GM10248 (cell line): ENCODE measurements at regions of chr6 and their contacts with region 1.

Region 1: DNA sequence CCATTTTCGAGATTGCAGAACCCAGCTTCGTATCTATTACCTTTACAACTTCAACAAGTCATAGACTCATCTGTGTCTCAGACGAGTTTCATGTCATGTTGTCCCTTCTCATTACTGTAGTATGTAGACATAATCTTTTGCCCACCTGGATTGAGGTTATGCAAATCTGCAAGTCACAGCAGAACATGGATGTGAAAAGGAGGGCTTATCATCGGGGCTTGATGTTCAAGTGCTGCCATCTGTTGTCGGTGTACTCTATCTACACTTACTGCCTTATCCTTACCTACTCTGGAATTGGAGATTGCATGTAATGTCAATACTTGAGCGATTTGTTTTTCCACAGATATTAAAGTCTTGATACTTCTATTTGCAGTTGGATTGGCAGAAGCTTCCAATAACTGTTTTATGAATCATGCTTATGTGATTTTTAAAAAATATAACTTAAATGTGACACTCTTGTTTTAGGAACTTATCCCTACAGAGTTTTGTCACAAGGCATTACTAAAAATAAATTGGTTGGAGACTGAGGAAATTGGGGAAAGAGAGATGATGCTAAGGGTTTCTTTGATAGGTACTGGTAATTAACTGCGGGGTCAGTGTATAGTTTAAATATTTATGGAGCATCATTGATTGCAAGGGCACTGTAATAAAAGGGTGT is 3.0 kb upstream of the GOPC start:
- DNase-seq: peak; percentile 60
- CTCF ChIP-seq: peak; percentile 60

Region 2: DNA sequence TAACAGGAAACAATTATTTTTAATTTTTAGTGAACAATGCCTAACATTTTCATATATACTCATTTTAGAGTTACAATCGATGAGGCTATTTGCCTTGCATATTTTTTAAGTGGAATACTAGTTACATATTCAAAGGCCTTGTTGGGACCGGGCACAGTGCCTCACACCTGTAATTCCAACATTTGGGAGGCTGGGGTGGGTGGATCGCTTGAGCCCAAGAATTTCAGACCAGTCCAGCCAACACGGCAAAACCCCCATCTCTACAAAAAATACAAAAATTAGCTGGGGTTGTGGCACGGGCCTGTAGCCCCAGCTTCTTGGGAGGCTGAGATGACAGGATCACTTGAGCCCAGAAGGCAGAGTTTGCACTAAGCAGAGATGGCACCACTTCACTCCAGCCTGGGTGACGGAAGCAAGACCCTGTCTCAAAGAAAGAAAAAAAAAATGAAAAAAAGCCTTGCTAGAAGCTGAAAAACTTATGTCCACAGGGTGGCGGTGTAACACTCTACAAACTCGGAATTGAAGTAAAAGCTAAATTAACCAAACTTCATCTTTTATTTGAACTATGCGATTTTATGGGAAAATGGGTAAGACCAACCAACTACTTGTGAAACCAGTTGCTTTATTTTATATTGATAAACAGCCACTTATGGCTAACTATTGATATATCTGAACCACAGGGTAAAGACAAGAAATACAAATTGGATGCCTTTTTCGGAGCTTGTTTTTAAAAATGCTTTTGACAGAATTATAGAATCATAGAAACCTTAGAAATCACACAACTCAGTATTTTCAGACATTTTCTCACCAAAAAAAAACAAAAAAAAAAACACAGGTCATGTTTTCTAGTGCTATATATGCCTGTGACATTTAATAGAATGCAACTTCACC is 155.5 kb before region 1 on chr6:
- CTCF ChIA-PET with region 1: interaction called, 58 read pairs
- POLR2A ChIA-PET with region 1: no interaction called
- DNase-seq: peak; percentile 21
- CTCF ChIP-seq: peak; percentile 55

Region 3: DNA sequence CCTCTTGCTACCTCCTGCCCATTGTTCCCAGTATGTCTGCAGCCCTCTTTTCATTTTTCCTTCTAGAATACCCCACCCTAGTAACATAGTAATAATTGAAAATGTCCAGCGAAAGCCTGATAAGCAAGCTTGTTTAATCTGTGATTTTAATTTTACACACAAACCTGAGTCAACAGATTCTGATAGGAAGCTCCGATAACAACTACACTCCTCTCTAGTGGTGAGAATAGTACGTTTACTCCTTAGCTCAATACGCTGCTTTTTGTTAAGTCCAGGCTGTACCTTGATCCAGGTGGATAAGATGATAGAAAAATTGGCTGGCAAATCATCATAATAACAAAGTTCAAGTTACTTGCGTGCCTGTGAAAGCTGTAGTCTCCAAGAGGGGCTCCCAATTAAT is 148.3 kb before region 1 on chr6:
- CTCF ChIA-PET with region 1: interaction called, 58 read pairs
- POLR2A ChIA-PET with region 1: no interaction called
- DNase-seq: no peak
- CTCF ChIP-seq: no peak

Region 4: DNA sequence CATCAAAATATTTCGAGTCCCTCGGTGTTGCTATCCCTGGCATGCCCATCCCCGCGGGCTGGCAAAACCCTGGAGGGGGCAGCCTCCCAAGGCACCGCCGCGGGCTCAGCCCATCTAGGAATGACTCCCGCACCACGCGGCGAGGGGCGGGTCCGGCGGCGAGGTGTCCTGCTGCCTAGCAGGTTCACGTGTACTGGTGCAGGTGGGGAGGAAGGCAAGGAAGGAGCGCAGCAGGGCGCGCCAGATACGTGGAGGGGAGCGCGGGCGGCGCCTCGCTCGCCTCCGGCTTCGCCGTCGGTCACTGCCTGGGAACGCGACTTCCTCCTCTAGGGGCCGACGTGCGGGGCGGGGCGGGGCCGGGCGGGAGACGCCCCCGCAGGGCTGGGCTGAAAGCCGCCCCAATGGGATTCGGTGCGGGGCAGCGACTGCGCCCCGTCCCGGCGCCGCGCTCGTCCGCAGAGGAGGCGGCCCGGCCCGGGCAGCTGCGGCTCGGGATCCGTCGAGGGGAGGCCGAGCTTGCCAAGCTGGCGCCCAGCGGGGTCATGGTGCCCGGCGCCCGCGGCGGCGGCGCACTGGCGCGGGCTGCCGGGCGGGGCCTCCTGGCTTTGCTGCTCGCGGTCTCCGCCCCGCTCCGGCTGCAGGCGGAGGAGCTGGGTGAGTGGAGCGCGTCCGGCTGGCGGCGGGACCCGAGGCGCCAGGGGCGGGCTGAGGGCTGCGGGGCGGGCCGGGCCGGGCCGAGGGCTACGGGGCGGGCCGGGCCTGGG is 122.9 kb before region 1 on chr6 and contains the start of gene DCBLD1:
- CTCF ChIA-PET with region 1: interaction called, 35 read pairs
- POLR2A ChIA-PET with region 1: interaction called, 3 read pairs
- DNase-seq: peak; percentile 84
- CTCF ChIP-seq: no peak

Region 5: GRCh38 chr6:117585647-117586046 is 19.7 kb before region 1 on chr6:
- CTCF ChIA-PET with region 1: interaction called, 13 read pairs
- POLR2A ChIA-PET with region 1: interaction called, 3 read pairs
- DNase-seq: no peak
- CTCF ChIP-seq: no peak

Region 6: DNA sequence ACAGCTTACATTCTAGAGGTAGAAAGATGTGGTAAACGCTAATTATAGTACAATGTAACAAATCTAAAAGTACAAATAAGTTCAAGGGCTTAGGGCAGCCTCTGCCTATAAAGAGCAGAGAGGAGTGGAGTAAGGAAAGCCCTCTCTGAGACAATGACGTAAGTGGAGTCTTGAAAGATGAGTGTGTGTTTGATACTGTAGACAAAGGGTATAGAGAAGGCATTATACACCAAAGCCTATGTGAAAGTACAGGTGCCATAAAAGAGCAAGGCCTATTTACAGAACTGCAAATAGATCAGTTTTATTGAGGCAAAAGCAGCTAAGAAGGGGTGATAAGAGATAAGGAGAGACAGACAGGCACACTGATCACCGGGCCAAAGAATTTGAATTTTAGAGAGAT is 13.9 kb before region 1 on chr6:
- CTCF ChIA-PET with region 1: interaction called, 10 read pairs
- POLR2A ChIA-PET with region 1: no interaction called
- DNase-seq: no peak
- CTCF ChIP-seq: no peak

Region 7: DNA sequence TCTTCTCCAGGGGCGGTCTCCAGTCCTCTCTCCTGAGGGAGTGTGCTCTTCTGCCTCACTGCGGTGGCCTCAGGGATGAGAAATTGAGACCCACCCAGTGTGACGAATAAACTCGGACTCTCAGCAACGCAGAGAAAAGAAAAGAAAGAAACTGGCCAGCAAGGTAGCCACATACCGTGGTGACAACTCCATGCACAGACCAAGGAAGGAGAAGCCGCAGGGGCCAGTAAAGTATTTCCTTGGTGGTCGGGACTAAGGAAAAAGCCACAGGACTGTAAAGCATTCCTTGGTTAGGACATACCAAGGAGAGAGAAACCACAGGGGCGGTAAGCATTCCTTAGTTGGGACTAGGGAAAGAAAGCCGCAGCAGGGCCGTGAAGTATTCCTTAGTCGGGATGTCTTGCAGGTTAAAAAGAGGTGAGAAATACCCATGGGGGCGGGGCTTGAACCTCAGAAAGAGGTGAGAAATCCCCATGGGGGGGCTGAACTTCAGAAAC is 10.6 kb after region 1 on chr6:
- CTCF ChIA-PET with region 1: interaction called, 15 read pairs
- POLR2A ChIA-PET with region 1: no interaction called
- DNase-seq: no peak
- CTCF ChIP-seq: no peak